Psoas muscle (tissue), 8 donors: ENCODE measurements at regions of chr15 and their contacts with region 1.

Region 1: DNA sequence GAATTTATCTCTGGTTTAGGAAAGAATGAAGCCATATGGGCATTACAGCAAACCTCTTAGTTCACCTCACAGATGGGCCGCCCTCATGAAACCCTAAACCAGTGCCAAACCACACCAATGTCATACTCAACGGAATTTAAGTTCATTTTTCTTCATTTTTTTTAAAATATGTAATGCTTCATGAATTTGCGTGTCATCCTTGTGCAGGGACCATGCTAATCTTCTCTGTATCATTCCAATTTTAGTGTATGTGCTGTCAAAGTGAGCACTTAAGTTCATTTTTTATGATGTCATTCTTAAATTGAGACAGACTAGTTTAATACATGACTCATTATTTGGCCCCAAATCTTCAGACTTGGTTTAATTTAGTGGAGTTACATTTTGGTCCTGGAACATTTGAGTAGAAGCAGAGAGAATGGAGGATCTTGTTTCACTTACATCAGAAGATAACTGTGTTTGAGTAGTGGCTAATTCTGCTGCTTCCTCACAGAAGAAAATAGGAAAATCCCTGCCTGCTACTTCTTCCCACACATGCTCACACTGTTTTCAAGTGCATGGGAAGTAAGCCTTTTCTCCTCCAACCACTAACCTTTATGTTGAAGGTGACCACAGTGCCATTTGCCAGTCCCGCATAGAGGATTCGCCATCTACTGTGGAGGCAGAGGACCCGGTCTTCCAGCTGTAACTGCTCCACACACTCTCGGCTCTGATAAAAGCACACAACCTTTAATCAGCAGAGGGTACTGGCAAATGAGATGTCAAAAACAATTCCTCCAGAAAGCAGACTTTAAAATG is 63.3 kb downstream of the ZNF106 start:
- DNase-seq: no peak
- ATAC-seq: peak; percentile 82 to 92 (median 88)
- H3K4me3 ChIP-seq: no peak overlapping the region
- H3K27ac ChIP-seq: peak overlapping the region; percentile 86
- H3K4me1 ChIP-seq: peaks cover 48% of the 10 kb centered on the region
- H3K27me3 ChIP-seq: no peaks in the 10 kb centered on the region
- CTCF ChIP-seq: no peak

Region 2: DNA sequence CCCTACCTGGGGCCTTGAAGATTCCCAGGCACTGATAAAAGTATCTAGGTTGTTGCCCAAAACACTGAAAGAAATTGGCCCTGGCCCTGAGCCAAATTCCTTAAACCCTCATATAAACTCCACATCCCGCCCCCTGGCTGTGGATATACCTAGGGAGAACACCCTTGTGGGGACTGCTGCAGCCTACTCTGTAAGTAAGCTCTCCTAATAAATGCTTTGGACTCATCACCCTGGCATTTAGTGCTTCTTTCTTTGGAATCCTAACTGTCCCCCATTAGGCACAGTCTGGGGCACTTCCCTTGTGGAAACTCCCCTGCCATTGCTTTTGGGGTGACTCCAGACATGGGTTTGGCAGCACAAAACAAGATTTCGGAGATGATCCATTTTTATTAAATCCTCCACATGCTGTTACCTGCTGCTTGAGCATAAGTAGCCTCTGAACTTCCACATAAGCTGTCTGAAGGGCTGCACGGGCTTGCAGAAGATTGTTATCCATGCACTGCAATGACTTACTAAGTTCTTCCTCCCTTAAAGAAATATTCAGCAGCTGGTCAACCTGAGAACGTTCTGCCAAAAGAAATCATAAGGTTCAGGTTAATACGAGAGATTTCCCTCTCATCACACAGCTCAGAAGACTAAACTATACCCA is 16.9 kb after region 1 on chr15:
- intact Hi-C with region 1: loop called in 1 of 2 experiments (anchors 2 kb)
- DNase-seq: no peak
- ATAC-seq: no peak
- H3K4me3 ChIP-seq: no peak overlapping the region
- H3K27ac ChIP-seq: peak overlapping the region; percentile 90
- H3K4me1 ChIP-seq: peaks cover 31% of the 10 kb centered on the region
- H3K27me3 ChIP-seq: no peaks in the 10 kb centered on the region
- CTCF ChIP-seq: no peak

Region 3: DNA sequence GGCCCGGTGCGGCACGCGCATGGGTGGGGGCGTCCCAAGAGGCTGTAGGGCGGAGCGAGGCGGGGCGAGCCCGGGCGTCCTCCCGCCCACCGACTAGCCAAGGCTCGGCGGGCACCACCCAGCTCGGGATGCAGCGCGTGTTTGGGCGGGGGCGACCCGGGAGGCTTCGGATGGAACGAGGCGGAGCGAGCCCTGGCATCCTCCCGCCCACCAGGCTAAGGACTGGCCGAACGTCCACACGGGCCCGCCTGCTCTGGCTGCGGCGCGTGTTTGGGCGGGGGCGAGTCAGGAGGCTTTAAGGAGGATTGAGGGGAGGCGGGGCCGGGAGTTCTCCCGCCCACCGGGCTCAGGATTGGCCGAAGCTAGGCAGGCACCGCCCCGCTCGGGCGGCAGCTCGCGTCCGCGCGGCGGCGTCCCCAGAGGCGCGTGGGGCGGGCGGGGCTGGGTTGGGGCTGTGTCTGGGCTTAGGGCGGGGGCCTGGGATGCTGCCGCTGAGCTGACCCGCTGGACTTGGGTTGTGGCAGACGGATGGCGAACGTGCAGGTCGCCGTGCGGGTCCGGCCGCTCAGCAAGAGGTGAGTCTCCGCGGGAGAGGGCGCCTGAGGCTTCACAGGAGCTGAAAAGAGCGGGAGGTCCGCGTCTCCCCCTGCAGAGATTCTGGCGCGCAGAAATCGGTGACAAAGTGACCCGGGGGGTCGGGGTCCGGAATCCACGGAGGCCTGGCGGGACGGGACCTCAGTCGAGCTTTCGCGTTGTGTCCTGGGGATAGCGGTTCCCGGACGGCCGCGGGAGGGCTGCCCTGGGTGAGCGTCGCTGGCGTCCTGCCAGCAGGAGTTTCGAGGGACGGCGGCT is 147.8 kb after region 1 on chr15 and contains the start of gene STARD9:
- intact Hi-C with region 1: no loop called
- DNase-seq: peak; percentile 99
- ATAC-seq: peak; percentile 97 to 98 (median 98)
- H3K4me3 ChIP-seq: peak within 1 kb of the TSS; percentile 90
- H3K27ac ChIP-seq: peak within 1 kb of the TSS; percentile 73
- H3K4me1 ChIP-seq: peaks cover 7% of the 10 kb centered on the region
- H3K27me3 ChIP-seq: peaks cover 0 to 5% (median 0%) of the 10 kb centered on the region in 3 donors
- CTCF ChIP-seq: no peak
- total RNA-seq, gene STARD9: 1.6 to 4.1 (median 2.0) TPM